BJ (cell line): ENCODE measurements at regions of chr1 and their contacts with region 1.

Region 1: GRCh38 chr1:221263831-221264767 is 384.9 kb downstream of the HLX start:
- DNase-seq: peak; percentile 51
- H3K4me3 ChIP-seq: no peak overlapping the region
- H3K27me3 ChIP-seq: no peaks in the 10 kb centered on the region
- CTCF ChIP-seq: peak; percentile 73

Region 2: GRCh38 chr1:221246628-221247415 is 17.3 kb before region 1 on chr1:
- CTCF ChIA-PET with region 1: interaction called, 25 read pairs
- POLR2A ChIA-PET with region 1: no interaction called
- DNase-seq: no peak
- H3K4me3 ChIP-seq: no peak overlapping the region
- H3K27me3 ChIP-seq: no peaks in the 10 kb centered on the region
- CTCF ChIP-seq: no peak

Region 3: DNA sequence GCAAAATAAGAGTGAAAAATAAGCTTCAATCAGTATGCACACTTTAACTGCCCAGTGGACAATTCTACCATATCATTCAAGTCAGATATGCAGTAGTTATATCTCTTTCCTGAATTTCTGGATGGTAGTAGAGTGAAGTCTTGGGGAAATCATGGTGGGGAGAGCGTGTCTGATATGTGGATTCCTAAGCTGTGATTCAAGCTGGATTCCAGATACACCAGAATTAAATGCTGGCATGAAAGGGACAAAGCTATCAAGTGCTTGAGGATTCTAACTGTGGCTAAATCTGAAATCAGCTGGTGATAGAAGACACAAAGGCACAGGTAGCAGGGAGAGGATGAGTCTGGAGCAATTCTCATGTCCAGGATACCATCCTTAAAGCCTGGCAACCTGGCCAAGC is 154.2 kb after region 1 on chr1:
- CTCF ChIA-PET with region 1: interaction called, 10 read pairs
- POLR2A ChIA-PET with region 1: no interaction called
- DNase-seq: no peak
- H3K4me3 ChIP-seq: no peak overlapping the region
- H3K27me3 ChIP-seq: no peaks in the 10 kb centered on the region
- CTCF ChIP-seq: no peak